ENCODE measurements at regions of chr5 and their contacts with region 1.

Region 1: GRCh38 chr5:79133657-79134451 is 22.2 kb downstream of the BHMT start:
- DNase-seq: peak; percentile 88 to 89
- H3K4me3 ChIP-seq: no peak overlapping the region
- H3K4me1 ChIP-seq: peaks cover 16% of the 10 kb centered on the region
- H3K27me3 ChIP-seq: no peaks in the 10 kb centered on the region

Region 2: GRCh38 chr5:79020861-79021561 is 112.8 kb before region 1 on chr5:
- in situ Hi-C with region 1: loop called (anchors 5 kb)
- DNase-seq: peak; percentile 76 to 80
- H3K4me3 ChIP-seq: no peak overlapping the region
- H3K4me1 ChIP-seq: peaks cover 25% of the 10 kb centered on the region
- H3K27me3 ChIP-seq: peaks cover 46% of the 10 kb centered on the region

Region 3: DNA sequence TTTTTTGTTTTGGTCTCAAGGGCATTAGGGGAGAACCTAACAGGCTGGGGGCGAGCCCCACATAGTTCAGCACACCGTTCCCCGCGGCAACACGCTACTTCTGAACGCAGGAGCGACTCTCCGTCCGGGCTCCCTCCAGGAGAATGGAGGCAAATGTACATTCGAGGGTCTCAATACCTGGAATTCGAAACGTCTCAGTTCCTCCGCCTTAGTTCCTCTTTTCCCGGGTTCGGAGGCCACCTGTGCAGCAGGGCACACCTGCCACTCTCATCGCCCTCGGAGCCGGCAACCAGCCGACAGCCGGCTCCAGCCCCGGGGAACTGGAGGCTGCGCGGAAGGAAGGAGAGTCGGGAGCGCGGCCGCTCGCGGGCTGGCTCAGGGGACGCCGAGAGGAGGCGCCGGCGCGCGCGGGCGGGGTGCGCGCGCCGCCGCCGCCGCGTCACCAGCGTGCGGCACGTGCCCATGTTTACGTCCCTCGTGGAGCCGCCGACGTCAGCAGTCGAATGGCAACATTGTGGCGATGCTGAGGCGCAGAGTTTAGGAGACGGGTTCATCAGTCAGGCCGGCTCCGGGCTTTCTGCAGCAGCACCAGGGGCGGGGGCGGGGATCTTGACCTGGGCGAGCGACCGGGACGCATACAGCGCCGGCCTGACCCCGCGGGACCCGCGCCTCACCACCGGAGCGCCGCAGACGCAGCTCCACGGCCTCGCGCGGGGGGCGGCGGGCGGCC is 101.9 kb after region 1 on chr5 and contains the start of gene JMY:
- in situ Hi-C with region 1: loop called (anchors 10 kb)
- DNase-seq: peak; percentile 75 to 87
- H3K4me3 ChIP-seq: peak within 1 kb of the TSS; percentile 63
- H3K4me1 ChIP-seq: peaks cover 13% of the 10 kb centered on the region
- H3K27me3 ChIP-seq: no peaks in the 10 kb centered on the region

Region 4: DNA sequence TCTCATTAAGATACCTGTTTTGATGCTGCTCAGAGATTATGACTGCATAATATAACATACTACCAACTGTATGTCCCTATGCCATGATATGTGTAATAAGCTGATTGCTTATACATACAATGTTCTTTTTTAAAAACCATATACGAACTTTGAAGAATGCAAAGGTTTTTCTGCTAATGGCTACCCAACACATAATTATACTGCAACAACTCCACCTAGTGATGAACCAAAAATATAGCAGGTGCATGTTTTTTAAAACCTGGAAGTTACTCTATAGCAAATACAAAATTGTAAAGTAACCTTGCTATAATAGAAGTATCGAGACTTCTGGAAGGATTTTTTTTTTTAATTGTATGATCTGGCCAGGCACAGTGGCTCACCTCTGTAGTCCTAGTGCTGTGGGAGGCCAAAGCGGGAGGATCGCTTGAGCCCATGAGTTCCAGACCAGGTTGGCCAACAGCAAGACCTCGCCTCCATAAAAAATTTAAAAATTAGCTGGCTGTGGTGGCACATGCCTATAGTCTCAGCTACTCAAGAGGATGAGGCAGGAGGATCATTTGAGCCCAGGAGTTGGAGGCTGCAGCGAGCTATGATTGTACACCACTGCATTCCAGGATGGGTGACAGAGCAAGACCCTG is 331.0 kb after region 1 on chr5:
- in situ Hi-C with region 1: loop called (anchors 25 kb)
- DNase-seq: peak in 1 of 2 experiments; percentile 60
- H3K4me3 ChIP-seq: no peak overlapping the region
- H3K4me1 ChIP-seq: peaks cover 4% of the 10 kb centered on the region
- H3K27me3 ChIP-seq: no peaks in the 10 kb centered on the region

Measured in HAP-1 (cell line).